CD14-positive monocyte (primary cell): ENCODE measurements at regions of chr9 and their contacts with region 1.

Region 1: DNA sequence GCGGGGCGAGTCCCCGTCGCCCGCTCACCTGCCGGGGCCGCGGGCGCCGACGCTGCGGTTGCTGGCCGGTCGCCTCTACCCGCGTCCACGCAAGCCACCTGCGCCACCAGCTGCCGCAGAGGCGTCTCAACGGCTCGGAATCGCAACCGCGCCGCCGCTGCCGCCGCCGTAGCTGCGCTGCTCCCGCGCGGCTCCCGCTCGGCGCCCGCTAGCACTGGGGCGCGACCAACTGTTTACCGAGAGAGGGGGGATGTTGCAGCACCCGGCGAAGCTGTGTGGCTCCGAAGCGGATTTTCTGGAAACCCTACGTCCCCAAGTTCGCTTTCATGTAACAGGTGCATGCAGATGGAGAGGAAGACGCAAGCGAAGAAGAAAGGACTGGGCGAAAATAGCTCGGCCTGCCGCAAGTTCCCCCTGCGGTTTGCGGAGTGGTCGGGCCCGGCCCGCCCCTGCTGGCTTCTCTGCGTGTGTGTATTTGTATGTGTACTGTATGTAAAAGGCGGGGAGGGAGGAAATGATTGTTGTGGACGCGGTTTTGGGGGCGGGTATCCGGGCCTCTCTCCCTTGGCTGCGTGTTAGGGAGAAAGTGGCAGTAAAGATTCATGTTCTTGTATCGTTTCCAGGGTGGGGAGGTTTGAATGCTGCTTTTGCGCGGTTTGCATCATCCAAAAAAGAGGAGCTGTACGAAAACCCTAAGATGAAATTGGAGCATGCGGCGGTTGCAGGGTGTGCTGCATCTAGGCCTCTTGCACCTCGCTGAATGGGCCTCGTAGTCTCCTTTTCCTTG is at the start of gene PSIP1:
- DNase-seq: peak; percentile 71 to 79 (median 78)
- H3K4me3 ChIP-seq: peak within 1 kb of the TSS; percentile 86 to 97 (median 92)
- H3K4me3 Mint-ChIP-seq: peak within 1 kb of the TSS; percentile 97 to 98
- H3K27ac ChIP-seq: peak within 1 kb of the TSS; percentile 80 to 98
- H3K27ac Mint-ChIP-seq: peak within 1 kb of the TSS; percentile 97 to 100 (median 100)
- H3K4me1 ChIP-seq: peaks cover 17 to 27% of the 10 kb centered on the region in 2 donors
- H3K4me1 Mint-ChIP-seq: peaks cover 31% of the 10 kb centered on the region
- H3K27me3 ChIP-seq: no peaks in the 10 kb centered on the region
- H3K27me3 Mint-ChIP-seq: no peaks in the 10 kb centered on the region
- CTCF ChIP-seq: no peak
- polyA plus RNA-seq, gene PSIP1: 14.7 to 20.2 (median 19.8) TPM

Region 2: GRCh38 chr9:15422372-15423230 is 88.4 kb before region 1 on chr9 and contains the start of gene SNAPC3:
- intact Hi-C with region 1: loop called (anchors 5 to 10 kb)
- DNase-seq: peak; percentile 89 to 93 (median 92)
- H3K4me3 ChIP-seq: peak within 1 kb of the TSS; percentile 76 to 99 (median 90)
- H3K4me3 Mint-ChIP-seq: peak within 1 kb of the TSS; percentile 90 to 93
- H3K27ac ChIP-seq: peak within 1 kb of the TSS; percentile 65 to 85
- H3K27ac Mint-ChIP-seq: peak within 1 kb of the TSS; percentile 85 to 96 (median 91)
- H3K4me1 ChIP-seq: peaks cover 41 to 50% of the 10 kb centered on the region in 2 donors
- H3K4me1 Mint-ChIP-seq: peaks cover 45% of the 10 kb centered on the region
- H3K27me3 ChIP-seq: no peaks in the 10 kb centered on the region
- H3K27me3 Mint-ChIP-seq: peaks cover 0 to 5% (median 1%) of the 10 kb centered on the region in 3 donors
- CTCF ChIP-seq: no peak
- polyA plus RNA-seq, gene SNAPC3: 10.9 to 15.8 (median 14.3) TPM

Region 3: GRCh38 chr9:15552636-15553527 is 41.9 kb after region 1 on chr9 and contains the start of gene CCDC171:
- intact Hi-C with region 1: loop called (anchors 5 kb)
- DNase-seq: peak; percentile 85 to 88 (median 85)
- H3K4me3 ChIP-seq: peak within 1 kb of the TSS; percentile 68 to 87 (median 71)
- H3K4me3 Mint-ChIP-seq: peak within 1 kb of the TSS; percentile 92 to 95
- H3K27ac ChIP-seq: peak within 1 kb of the TSS in 1 of 2 donors; percentile 56
- H3K27ac Mint-ChIP-seq: peak within 1 kb of the TSS in 5 of 7 donors; percentile 53 to 88 (median 62)
- H3K4me1 ChIP-seq: peaks cover 18 to 25% of the 10 kb centered on the region in 2 donors
- H3K4me1 Mint-ChIP-seq: peaks cover 23% of the 10 kb centered on the region
- H3K27me3 ChIP-seq: peaks cover 0 to 4% of the 10 kb centered on the region in 2 donors
- H3K27me3 Mint-ChIP-seq: peaks cover 1 to 13% (median 10%) of the 10 kb centered on the region in 3 donors
- CTCF ChIP-seq: no peak
- polyA plus RNA-seq, gene CCDC171: 0.08 to 0.17 (median 0.10) TPM

Region 4: GRCh38 chr9:15618540-15619331 is 107.8 kb after region 1 on chr9:
- intact Hi-C with region 1: no loop called
- DNase-seq: no peak
- H3K4me3 ChIP-seq: no peak overlapping the region
- H3K4me3 Mint-ChIP-seq: no peak overlapping the region
- H3K27ac ChIP-seq: no peak overlapping the region
- H3K27ac Mint-ChIP-seq: no peak overlapping the region
- H3K4me1 ChIP-seq: no peaks in the 10 kb centered on the region
- H3K4me1 Mint-ChIP-seq: no peaks in the 10 kb centered on the region
- H3K27me3 ChIP-seq: no peaks in the 10 kb centered on the region
- H3K27me3 Mint-ChIP-seq: no peaks in the 10 kb centered on the region
- CTCF ChIP-seq: no peak